Activated CD4-positive, alpha-beta T cell treated with anti-CD3 and anti-CD28 coated beads for 36 hours (primary cell): ENCODE measurements at regions of chr22 and their contacts with region 1.

Region 1: GRCh38 chr22:27919222-27919941 is at the start of gene PITPNB:
- DNase-seq: peak; percentile 99
- ATAC-seq: peak; percentile 93
- H3K4me3 Mint-ChIP-seq: peak within 1 kb of the TSS; percentile 97
- H3K27ac Mint-ChIP-seq: peak within 1 kb of the TSS; percentile 98
- H3K4me1 Mint-ChIP-seq: peaks cover 56% of the 10 kb centered on the region
- H3K27me3 Mint-ChIP-seq: no peaks in the 10 kb centered on the region
- total RNA-seq, gene PITPNB: 96.5 to 111 TPM

Region 2: DNA sequence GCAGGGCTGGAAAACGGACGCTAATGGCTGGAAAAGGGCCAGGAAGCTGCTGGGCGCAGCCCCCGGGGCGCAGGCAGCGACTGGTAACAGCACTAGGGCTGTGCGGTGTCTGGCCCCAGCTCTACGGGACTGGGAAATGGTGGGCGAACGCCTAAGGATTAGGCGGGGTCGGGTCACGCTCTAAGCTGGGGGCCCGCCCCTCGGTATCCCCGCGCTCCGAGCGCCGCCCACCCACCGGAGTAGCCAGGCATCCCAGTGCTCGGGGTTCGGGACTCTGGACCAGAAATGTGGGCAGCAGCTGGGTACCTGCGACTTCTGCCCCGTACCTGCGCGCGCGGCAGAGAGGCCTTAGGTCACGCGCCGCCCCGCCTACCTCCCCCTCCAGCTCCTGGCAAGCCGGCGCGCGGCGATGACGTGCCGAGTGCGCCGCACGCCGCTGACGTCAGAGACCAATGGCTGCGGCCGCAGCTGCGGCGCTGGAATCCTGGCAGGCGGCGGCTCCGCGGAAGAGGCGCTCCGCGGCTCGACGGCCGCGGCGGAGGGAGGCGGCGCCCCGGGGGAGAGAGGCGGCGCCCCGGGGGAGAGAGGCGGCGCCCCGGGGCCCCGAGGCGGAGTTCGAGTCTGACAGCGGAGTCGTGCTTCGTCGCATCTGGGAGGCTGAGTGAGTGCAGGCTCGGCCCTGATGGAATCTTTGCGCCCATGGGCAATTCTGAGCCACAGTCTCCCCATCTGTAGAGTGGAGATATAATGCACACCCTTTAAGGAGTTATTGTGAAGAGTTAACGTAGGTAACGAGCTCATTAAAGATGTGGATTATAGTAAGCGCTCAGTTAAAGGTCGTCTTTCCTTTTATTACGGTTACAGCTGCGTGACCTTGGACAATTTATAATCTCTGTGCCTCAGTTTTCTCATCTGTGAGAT is 1435.7 kb before region 1 on chr22 and contains the starts of genes HPS4 and SRRD:
- CTCF ChIA-PET with region 1: no interaction called
- POLR2A ChIA-PET with region 1: no interaction called
- intact Hi-C with region 1: loop called in 1 of 2 experiments (anchors 1 kb)
- DNase-seq: peak; percentile 95
- ATAC-seq: peak; percentile 75
- H3K4me3 Mint-ChIP-seq: peak within 1 kb of the TSS; percentile 82
- H3K27ac Mint-ChIP-seq: peak within 1 kb of the TSS; percentile 95
- H3K4me1 Mint-ChIP-seq: peaks cover 66% of the 10 kb centered on the region
- H3K27me3 Mint-ChIP-seq: no peaks in the 10 kb centered on the region
- total RNA-seq, gene HPS4: 49.3 to 60.9 TPM
- total RNA-seq, gene SRRD: 17.5 to 28.5 TPM

Region 3: DNA sequence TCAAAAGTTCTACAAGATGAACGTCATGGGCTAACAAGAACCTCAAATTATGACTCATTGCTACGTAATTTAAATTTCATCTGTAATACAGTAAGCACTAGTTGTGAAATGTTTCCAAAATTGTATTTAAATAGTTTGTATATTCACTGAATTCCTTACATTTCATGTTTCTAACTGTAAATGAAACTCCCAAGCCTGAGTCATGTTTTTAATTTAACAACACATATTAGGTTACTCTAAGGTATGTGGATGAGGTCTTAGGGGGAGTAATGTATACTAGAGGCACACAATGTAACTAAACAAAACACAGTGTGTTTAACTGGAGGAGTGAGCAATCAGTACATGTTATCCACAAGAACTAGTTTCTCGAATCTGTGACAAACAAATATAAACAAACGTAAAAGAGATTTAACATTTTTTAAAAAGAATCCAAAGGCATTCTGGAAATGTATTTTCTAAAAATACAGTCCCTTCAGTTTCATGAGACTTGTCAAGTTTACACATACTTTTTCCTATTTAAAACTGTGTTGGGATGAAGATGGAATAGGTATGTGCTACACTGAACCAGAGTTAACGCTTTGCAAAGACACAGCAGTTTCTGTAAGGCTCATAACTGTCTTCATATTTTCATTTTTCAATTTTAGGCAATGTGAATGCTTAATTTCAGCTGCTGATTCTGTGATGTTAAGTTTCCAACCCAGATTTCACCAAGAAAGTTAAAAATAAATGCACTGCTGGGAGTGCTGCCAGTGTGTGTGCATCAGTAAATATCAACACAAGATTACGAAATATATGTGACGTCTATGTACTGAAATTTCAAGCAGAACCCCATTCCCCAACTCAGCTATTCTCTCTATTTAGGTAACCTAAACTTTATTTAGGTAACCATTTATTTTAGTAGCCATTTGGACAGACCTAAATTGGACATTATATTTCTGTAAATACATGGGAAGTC is 53.0 kb before region 1 on chr22:
- CTCF ChIA-PET with region 1: interaction called, 3 read pairs
- POLR2A ChIA-PET with region 1: no interaction called
- intact Hi-C with region 1: loop called in 1 of 2 experiments (anchors 5 kb)
- DNase-seq: no peak
- ATAC-seq: no peak
- H3K4me3 Mint-ChIP-seq: no peak overlapping the region
- H3K27ac Mint-ChIP-seq: peak overlapping the region; percentile 74
- H3K4me1 Mint-ChIP-seq: peaks cover 44% of the 10 kb centered on the region
- H3K27me3 Mint-ChIP-seq: no peaks in the 10 kb centered on the region

Region 4: DNA sequence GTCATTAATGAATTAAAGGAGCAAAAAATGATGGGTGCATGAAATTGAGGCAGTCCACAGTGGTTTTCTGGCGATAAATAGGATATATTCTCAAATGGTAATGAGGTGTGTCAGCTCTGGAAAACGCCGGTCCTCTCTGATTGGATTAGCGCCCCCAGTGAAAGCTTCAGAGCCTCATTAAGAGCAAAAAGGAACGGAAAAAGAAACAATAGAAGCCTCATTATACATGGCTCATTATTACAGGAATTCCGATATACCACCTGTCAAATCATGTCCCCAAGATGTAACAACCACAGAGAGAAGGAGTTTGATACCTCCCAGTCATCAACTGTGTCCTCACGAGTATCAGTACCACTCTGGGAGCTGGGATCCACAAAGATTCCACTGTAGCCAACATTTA is 175.4 kb after region 1 on chr22:
- CTCF ChIA-PET with region 1: no interaction called
- POLR2A ChIA-PET with region 1: no interaction called
- intact Hi-C with region 1: no loop called
- DNase-seq: no peak
- ATAC-seq: no peak
- H3K4me3 Mint-ChIP-seq: no peak overlapping the region
- H3K27ac Mint-ChIP-seq: no peak overlapping the region
- H3K4me1 Mint-ChIP-seq: no peaks in the 10 kb centered on the region
- H3K27me3 Mint-ChIP-seq: no peaks in the 10 kb centered on the region

Region 5: GRCh38 chr22:28741758-28742561 is 822.6 kb after region 1 on chr22 and contains the starts of genes CHEK2 and HSCB:
- CTCF ChIA-PET with region 1: no interaction called
- POLR2A ChIA-PET with region 1: interaction called, 3 read pairs
- intact Hi-C with region 1: loop called in 1 of 2 experiments (anchors 1 kb)
- DNase-seq: peak; percentile 99
- ATAC-seq: peak; percentile 93
- H3K4me3 Mint-ChIP-seq: peak within 1 kb of the TSS; percentile 81
- H3K27ac Mint-ChIP-seq: peak within 1 kb of the TSS; percentile 83
- H3K4me1 Mint-ChIP-seq: peaks cover 32% of the 10 kb centered on the region
- H3K27me3 Mint-ChIP-seq: no peaks in the 10 kb centered on the region
- total RNA-seq, gene CHEK2: 37.5 to 41.3 TPM
- total RNA-seq, gene HSCB: 16.5 to 18.5 TPM

Region 6: GRCh38 chr22:28800308-28801077 is 881.1 kb after region 1 on chr22 and contains the start of gene XBP1:
- CTCF ChIA-PET with region 1: no interaction called
- POLR2A ChIA-PET with region 1: no interaction called
- intact Hi-C with region 1: loop called in 1 of 2 experiments (anchors 1 kb)
- DNase-seq: peak; percentile 93
- ATAC-seq: peak; percentile 85
- H3K4me3 Mint-ChIP-seq: peak within 1 kb of the TSS; percentile 84
- H3K27ac Mint-ChIP-seq: peak within 1 kb of the TSS; percentile 99
- H3K4me1 Mint-ChIP-seq: peaks cover 44% of the 10 kb centered on the region
- H3K27me3 Mint-ChIP-seq: no peaks in the 10 kb centered on the region
- total RNA-seq, gene XBP1: 88.8 to 101 TPM

Region 7: GRCh38 chr22:29072193-29072978 is 1153.0 kb after region 1 on chr22:
- CTCF ChIA-PET with region 1: no interaction called
- POLR2A ChIA-PET with region 1: no interaction called
- intact Hi-C with region 1: loop called in 1 of 2 experiments (anchors 5 kb)
- DNase-seq: peak; percentile 93
- ATAC-seq: peak; percentile 98
- H3K4me3 Mint-ChIP-seq: peak overlapping the region; percentile 66
- H3K27ac Mint-ChIP-seq: no peak overlapping the region
- H3K4me1 Mint-ChIP-seq: peaks cover 15% of the 10 kb centered on the region
- H3K27me3 Mint-ChIP-seq: peaks cover 51% of the 10 kb centered on the region